ENCODE measurements at regions of chr11 and their contacts with region 1.

Region 1: GRCh38 chr11:128157423-128158298 is 429.7 kb downstream of the ETS1 start:
- DNase-seq: peak; percentile 64

Region 2: DNA sequence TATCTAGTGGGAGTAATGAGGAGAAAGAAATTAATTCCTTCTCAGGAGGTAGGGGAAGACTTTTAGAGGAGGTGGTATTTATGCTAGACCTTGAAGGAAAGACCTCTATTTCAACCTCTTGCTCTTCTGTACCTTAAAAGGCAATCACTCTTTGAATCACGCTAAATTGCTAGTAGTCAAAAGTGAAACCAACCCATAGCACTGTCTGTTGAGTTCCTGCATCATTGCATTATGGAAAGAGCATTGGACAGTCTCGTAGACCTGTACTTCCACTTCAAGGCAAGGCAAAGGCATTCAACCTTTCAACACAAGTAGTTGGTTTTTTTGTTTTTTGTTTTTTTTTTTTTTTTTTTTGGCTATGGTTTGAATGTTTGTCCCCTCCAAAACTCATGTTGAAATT is 340.7 kb before region 1 on chr11:
- CTCF ChIA-PET with region 1: no interaction called
- POLR2A ChIA-PET with region 1: no interaction called
- DNase-seq: no peak

Region 3: GRCh38 chr11:128146926-128147605 is 10.6 kb before region 1 on chr11:
- CTCF ChIA-PET with region 1: interaction called, 11 read pairs
- POLR2A ChIA-PET with region 1: no interaction called
- DNase-seq: no peak

Region 4: DNA sequence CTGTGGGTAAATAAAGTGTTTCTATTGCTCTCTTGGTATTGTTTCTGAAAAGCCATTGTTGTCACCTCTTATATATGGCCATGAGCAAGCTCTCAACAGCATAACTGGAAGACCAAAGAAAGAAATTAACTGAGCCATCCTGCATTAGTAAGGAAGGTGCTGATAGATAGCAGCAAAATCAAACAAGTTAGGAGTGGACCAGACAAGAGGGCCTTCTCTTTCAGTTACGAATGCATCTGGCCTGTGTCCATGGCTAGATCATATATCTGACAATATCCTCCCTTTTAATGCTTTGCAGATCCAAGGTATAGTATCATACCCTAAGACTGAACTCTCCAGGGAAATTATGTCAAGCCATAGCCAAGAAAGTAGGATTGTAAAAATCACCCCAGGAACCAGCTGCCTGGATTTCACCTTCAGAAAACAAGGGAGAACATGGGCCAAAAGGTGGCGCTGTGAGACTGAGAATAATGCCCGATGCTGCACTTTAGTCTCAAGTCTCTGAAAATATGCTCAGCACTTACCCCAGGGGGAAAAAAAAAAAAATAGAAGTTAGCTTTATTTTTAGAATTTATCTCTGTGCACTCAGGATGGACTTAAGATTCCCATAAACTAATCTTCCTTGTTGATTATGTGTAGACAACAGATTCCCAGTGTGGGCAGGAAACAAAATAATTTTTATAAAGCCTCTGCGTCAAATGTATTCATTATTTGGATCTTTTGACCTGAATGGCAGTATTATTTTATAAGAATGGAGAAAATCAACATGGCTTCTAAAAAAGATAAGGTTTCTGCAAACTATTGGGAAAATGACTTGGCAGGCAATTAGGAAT is 14.6 kb after region 1 on chr11:
- CTCF ChIA-PET with region 1: interaction called, 36 read pairs
- POLR2A ChIA-PET with region 1: no interaction called
- DNase-seq: peak; percentile 67

Region 5: DNA sequence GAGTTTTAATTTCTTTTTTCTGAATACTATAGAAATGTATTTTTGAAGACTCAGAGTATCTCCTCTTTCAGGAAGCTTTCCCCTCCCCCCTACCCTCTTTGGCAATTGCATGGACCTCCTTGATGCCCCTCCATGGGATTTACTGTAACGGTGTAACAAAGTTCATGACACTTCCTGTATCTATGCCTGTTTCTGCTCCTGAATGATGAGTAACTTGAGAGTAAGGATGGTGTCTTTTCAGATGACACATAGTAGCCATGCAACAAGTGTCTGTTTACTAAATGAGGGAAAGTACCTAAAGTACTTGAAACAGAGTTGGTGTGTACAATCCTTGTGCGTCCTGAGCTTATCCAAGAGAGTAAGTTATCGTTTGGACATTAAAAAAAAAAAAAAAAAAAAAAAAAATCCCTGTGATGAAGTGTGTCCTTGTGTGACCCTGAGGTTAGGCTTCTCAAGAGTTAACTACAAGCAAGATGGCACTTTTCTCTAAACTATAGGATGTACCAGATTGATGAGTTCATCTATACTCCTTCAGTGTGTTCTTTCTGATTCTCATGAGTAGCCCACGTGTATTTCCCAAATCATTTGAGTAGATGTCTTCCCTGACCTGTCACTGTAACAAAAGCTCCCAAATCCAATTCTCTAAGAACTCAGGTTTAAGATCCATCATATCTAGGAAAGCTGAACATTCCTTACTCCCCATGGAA is 422.3 kb after region 1 on chr11:
- CTCF ChIA-PET with region 1: no interaction called
- POLR2A ChIA-PET with region 1: no interaction called
- DNase-seq: no peak

Region 6: DNA sequence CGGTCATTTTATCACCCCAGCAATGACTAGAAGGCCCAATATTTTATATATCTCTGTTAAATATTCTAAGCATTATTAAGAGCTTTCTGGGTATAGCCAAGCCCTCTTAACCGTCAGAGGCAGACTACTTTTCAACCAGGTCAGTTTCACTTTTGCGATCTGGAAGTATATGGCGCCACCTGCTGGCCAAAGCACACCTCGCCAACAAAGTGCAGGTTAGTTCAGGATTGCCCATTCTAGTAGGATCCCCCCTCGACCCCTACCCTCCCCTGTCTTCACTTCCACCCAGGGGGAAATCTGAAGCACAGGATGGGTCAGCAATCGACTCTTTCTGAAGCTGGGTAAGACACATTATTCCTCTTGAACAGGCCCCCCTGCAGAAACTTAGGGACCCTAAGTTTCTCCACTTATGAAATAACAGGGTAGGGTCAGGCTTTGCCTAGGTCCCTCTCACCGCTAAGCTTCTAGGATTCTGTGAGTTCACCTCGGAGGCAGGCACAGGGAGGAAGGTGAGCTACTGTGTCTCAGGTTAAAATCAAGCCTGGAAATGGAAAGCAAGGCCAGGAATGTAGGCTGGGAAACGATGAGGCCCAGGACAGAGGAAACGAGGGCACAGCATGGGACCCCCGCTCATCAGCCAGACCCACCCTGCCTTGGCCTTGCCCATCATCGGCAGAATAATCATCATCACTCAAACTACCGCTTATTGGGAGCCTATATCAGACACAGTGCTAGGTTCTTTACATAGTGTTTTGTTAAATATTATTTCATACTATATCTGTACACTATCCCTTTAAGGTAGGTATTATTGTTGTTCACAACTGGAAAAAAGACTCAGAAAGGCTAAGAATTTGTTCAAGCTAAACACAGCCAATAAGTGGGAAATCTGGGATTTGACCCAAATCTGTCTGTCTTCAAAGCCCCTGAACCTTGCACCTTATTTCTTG is 673.8 kb after region 1 on chr11:
- CTCF ChIA-PET with region 1: interaction called, 12 read pairs
- POLR2A ChIA-PET with region 1: no interaction called
- DNase-seq: peak; percentile 76

Measured in HEK293T (cell line).